Activated naive CD4-positive, alpha-beta T cell treated with anti-CD3 and anti-CD28 coated beads, Interleukin-2, amount 10 ng/mL, durations not matched to agents 7 days and 5 days (primary cell): ENCODE measurements at regions of chr1 and their contacts with region 1.

Region 1: DNA sequence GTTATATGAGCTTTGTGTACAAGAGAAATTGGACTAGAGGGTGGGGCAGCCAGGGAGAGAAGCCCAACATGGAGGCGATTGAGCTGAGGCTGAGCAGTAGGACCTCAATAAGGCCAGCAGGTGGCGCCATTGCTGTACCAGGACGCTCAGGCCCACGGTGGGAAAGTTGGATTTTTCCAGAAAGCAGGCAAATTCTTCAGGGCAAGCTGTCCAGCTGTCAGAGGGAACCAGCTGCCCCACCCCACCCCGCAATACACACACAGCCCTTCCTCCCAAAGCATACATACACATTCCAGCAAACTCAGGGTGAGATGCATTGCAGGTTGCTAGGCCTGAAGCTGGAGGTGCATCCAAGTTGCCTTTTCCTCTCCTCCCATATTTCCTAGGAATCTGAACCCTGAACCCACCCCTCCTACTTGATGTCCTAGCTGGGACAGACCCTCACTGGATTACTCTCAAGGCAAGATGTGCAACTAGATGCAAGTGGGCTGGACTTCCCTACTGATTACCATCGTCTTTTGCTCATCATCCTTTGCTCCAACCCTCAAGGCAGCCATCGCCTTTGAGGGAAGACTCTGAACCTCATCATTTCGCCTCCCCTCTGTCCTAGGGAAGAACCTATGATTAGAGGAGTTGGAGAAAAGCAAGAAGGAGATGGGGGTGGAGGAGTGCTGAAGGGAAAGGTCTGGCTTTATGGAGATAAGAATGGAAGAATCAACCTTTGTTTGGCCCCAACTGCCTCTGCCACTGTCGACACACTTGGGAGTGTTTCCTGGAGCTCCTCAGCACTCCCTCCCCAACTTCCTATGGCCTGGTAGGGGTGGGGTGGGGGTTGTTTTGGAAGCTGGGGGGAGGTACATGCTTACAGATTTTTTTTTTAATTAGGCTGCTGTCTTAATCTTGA is 25.5 kb downstream of the CD34 start:
- DNase-seq: peak; percentile 81
- H3K4me3 Mint-ChIP-seq: no peak overlapping the region
- H3K27ac Mint-ChIP-seq: peak overlapping the region; percentile 96
- H3K4me1 Mint-ChIP-seq: peaks cover 44% of the 10 kb centered on the region
- H3K27me3 Mint-ChIP-seq: peaks cover 22% of the 10 kb centered on the region

Region 2: DNA sequence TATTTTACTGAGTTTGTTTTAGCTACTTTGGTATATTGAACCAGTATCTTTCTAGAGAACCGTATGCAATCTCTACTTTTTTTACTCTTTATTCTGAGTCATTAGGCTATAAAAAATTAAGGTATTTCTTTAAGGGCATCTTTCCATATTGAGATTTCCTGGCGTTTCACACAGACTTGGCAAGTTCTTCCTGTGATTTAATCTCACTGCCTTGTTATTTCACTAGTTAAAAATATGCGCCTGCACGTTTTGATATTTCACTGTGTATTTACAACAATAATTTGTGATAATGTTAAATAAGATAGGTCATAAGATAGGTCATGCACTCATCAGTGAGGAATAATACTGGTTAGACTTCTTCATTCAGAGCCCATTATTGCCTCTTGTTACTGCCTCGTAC is 256.6 kb before region 1 on chr1:
- CTCF ChIA-PET with region 1: no interaction called
- DNase-seq: no peak
- H3K4me3 Mint-ChIP-seq: no peak overlapping the region
- H3K27ac Mint-ChIP-seq: no peak overlapping the region
- H3K4me1 Mint-ChIP-seq: no peaks in the 10 kb centered on the region
- H3K27me3 Mint-ChIP-seq: peaks cover 3% of the 10 kb centered on the region

Region 3: DNA sequence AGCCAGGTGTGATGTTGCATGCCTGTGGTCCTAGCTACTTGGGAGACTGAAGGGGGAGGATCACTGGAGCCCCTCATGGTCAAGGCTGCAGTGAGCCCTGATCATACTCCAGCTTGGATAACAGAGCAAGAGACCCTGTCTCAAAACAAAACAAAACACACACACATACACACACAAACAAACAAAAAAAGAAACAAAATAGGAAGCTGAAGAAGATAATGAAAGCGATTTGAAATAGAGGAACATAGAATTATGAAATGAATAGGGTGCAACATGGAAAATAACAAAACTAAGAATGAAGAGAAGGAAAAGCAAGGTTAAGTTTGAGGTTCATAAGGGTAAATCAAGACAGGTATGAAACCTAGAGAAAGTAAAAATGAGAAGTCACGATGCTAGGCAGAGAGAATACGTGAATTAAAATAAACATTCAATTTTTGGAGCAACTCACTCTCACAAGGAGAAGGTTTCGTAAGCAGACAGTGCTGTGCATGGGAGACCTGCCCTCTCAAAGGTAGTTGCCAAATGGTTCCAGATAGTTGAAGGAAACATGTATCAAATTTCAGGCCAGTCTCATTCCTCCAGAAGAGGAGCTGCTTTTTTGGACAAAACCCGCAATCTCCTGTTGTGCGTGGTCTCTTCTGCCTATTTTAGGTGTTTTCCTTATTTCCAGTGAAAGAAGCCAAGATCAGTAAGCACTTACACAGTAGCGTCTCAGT is 130.2 kb before region 1 on chr1:
- CTCF ChIA-PET with region 1: no interaction called
- DNase-seq: no peak
- H3K4me3 Mint-ChIP-seq: no peak overlapping the region
- H3K27ac Mint-ChIP-seq: peak overlapping the region; percentile 71
- H3K4me1 Mint-ChIP-seq: peaks cover 67% of the 10 kb centered on the region
- H3K27me3 Mint-ChIP-seq: no peaks in the 10 kb centered on the region

Region 4: DNA sequence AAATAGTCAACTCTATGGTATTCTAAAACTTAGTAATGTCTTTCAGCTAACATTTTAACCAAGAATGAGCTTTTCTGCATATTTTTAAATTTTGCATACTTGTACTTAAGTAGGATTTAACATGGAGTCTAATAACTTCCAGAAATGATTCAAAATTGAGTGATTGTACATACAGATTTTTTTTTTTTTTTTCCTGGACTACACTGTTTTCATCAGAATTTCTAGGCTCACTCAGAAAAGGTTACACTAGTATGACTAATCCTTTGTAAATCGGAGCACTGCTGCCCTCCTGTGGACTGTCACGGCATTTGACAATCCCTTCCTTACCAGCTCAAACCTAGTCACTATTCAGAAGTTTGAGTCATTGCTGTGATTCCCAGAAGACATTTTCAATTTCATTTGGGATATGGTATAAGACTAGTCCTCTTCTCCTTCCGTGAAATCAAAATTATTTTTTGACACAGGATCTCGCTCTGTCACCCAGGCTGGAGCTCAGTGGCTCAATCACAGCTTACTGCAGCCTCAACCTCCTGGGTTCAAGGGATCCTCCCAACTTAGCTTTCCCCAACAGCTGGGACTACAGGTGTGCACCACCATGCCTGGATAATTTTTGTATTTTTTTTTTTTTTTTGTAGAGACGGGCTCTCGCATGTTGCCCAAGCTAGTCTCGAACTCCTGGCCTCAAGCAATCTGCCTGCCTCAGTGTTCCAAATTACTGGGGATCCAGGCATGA is 88.0 kb before region 1 on chr1:
- CTCF ChIA-PET with region 1: interaction called, 10 read pairs
- DNase-seq: peak; percentile 88
- H3K4me3 Mint-ChIP-seq: no peak overlapping the region
- H3K27ac Mint-ChIP-seq: no peak overlapping the region
- H3K4me1 Mint-ChIP-seq: peaks cover 36% of the 10 kb centered on the region
- H3K27me3 Mint-ChIP-seq: no peaks in the 10 kb centered on the region

Region 5: DNA sequence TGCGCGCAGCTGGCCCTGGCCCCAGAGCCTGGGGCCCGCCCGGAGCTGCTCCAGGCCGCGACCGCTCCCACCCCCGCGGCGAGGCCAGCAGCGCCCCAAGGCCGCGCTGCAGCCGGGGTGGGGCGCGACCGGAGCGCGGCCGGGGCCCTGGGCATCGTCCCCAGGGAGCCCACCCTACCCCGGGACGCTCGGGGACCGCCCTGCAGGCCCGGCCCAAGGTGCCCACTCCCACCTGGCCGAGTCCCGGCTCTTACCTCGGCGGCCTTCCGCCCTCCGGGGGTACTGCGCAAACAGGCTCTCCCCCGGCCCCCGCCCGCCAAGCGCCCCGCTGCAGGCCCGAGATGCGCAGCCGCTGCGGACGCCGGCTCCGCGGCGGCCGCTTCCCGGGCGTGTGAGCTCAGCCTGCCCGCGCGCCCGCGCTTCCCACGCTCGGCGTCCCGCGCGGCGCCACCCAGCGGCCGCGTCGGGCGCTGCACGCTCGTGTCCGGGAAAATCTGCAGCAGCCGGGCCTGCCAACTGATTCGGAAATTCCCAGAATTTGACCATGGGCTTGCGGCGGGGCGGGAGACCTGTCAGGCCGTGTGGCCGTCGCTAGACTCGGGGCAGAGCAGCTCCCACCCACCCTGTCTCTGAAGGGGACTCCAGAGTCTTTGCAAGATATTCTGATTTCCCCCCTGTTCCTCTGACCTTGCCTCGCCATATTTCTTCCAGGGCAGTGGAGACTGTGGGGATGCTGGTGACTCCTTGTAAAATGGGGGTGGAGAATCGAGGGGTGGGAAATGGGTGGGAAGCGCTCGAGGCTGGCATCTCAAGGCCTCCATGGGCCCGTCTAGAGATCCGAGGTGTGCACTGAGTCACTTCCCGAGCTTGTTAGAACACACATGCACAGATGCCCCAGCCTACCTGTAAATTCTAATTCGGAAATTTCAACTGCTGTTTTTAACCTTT is 16.3 kb before region 1 on chr1:
- CTCF ChIA-PET with region 1: interaction called, 141 read pairs
- DNase-seq: peak; percentile 68
- H3K4me3 Mint-ChIP-seq: peak overlapping the region; percentile 95
- H3K27ac Mint-ChIP-seq: peak overlapping the region; percentile 97
- H3K4me1 Mint-ChIP-seq: peaks cover 83% of the 10 kb centered on the region
- H3K27me3 Mint-ChIP-seq: no peaks in the 10 kb centered on the region

Region 6: DNA sequence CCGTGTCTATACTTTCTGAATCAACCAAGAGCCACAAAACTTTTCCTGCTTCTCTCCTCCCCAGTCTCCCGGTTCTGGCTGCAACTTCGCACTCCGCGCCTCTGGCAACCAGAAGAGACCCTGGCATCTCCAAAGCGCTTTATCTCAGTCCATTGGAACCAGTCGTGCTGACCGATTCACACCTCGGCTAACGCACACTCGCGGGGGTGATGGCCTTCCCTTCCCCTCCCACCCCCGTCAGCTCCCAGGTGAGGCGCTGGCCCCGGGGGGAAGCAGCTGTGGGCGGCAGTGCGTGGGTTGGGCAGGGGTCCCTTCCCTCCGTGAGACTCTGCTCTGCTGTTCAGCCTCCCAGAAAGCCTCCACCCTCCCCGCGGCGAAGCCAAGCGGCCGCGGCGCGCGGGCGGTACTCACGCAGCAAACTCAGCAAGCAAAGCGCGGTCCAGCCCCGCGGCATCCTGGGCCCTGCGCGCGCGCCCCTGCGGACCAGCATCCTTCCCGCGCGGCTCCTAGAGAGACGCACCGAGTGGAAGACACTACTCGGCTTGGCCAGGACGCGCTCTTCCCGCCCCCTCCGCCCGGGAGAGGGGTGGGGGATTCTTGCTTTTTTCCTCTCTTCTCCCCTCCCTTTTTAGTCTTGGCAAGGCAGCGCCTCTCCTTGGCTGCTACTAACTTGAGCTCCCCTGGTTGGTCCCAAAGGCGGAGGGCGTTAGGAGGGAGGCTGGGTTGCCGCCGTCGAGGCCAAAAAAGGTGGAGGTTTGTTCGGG is 25.4 kb after region 1 on chr1 and contains the start of gene CD34:
- CTCF ChIA-PET with region 1: interaction called, 12 read pairs
- DNase-seq: peak; percentile 40
- H3K4me3 Mint-ChIP-seq: peak within 1 kb of the TSS; percentile 10
- H3K27ac Mint-ChIP-seq: no peak within 1 kb of the TSS
- H3K4me1 Mint-ChIP-seq: peaks cover 17% of the 10 kb centered on the region
- H3K27me3 Mint-ChIP-seq: peaks cover 83% of the 10 kb centered on the region

Region 7: GRCh38 chr1:207963427-207964194 is 78.2 kb after region 1 on chr1:
- CTCF ChIA-PET with region 1: interaction called, 215 read pairs
- DNase-seq: peak; percentile 85
- H3K4me3 Mint-ChIP-seq: peak overlapping the region; percentile 75
- H3K27ac Mint-ChIP-seq: peak overlapping the region; percentile 11
- H3K4me1 Mint-ChIP-seq: peaks cover 14% of the 10 kb centered on the region
- H3K27me3 Mint-ChIP-seq: peaks cover 60% of the 10 kb centered on the region

Region 8: DNA sequence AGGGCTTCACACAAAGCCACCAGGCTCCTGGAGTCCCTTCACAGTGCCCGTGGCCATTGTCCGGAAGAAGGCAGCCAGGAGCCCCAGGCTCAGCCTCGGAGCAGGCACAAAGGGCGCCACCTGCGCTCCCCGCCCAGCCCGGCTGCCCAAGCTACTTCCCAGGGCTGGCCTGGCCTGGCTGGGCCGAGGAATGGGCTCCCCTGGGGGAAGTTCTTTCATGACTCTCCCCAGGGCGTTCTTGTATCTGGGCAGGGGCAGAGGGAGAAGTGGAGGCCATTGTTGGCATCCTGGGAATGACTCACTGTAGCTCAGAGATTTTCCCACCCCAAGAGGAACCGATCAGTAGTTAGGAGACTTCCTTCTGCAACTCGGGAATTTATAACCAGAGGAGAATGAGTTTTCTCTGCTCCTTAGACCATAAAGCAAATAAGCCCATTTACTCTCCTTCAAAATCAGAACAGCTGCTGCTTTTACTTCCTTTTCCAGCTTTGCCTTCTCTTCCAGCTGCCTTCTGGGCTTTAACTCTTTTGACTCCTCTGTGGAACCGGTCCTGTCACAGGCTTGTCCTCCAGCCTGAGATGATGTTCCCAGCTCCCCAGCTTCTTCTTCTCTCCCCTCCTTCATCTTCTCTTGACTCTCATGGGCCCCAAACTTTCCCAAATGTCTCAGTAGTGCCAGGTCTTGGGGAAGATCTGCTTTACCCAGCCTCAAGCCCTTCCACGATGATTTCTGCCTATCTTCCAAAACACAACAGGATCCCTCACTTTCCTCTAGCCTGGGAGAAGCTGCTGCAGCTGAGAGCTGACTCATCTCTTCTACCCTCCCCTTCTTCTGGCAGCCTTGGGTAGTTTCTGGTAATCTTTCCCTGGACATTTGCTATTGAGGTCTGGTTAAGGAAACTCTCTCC is 144.3 kb after region 1 on chr1:
- CTCF ChIA-PET with region 1: no interaction called
- DNase-seq: no peak
- H3K4me3 Mint-ChIP-seq: no peak overlapping the region
- H3K27ac Mint-ChIP-seq: no peak overlapping the region
- H3K4me1 Mint-ChIP-seq: no peaks in the 10 kb centered on the region
- H3K27me3 Mint-ChIP-seq: peaks cover 48% of the 10 kb centered on the region